ENCODE measurements at regions of chr2 and their contacts with region 1.

Region 1: DNA sequence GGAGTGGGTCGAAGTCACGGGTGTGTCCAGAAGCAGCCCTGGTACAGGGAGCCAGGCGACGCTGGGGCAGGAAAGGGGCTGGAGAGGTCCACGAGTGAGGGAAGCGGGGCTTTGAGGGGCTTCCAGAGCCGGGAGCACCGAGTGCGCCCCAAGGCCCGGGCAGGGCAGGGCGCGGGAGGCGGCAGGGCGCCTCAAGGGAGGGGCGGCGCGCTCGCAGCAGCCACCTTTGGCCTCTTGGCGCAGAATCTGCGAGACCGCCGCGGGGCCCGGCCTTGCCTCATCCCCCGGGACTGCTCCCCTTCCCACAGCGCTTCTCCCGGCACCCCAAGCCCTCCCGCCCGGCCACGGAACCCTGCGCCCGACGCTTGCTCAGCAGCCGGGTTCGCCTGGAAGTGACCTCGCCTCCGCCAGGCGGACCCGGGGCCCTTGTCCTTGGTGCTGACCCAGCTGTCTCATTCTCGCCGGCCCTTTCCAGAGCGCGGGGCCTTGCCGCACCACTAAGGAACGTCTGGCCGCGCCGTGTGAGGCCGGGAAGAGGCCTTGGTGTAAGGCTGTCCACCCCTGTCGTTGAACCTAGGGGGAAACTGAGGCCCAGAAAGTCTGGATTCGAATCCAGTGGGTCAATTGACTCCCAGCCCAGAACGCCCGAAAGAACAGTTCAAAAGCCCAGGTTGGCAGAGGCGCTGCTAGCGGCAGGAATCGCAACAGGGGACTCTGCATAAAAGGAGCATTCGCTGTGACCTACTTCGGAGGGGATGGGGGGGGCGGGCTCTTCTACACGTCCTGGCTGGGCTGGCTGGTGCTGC is 584 bp upstream of the DNER start:
- DNase-seq: peak; percentile 46 to 91 (median 54)

Region 2: GRCh38 chr2:229133155-229133772 is 581.7 kb before region 1 on chr2:
- intact Hi-C with region 1: loop called (anchors 10 kb)
- DNase-seq: no peak

Region 3: GRCh38 chr2:229431327-229431954 is 283.5 kb before region 1 on chr2:
- intact Hi-C with region 1: loop called (anchors 5 kb)
- DNase-seq: no peak

Region 4: GRCh38 chr2:230627806-230628724 is 913.1 kb after region 1 on chr2:
- intact Hi-C with region 1: no loop called
- DNase-seq: no peak